BJ (cell line): ENCODE measurements at regions of chr16 and their contacts with region 1.

Region 1: GRCh38 chr16:16021988-16022682 is 72.7 kb downstream of the ABCC1 start:
- DNase-seq: peak; percentile 85
- H3K4me3 ChIP-seq: no peak overlapping the region
- H3K27me3 ChIP-seq: no peaks in the 10 kb centered on the region
- CTCF ChIP-seq: no peak

Region 2: DNA sequence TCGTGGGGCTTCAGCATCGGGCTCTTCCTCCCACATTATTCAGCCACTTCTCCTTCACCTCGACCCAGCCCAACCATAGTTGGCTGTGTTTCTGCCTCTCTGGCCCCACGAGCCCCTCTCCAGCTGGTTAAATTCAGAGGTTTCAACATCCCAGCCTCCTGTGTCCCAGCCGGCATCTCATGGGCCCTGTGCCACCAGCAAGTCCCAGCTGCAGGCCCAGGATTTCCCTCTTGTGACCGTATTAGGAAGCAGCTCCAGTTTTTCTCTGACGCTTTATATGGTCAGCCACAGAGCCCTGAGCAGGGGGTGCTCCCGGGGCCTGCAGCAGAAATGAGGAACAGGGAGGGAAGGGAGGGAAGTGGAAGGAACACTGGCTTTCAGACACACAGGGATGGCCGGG is 192.7 kb before region 1 on chr16:
- CTCF ChIA-PET with region 1: no interaction called
- POLR2A ChIA-PET with region 1: no interaction called
- DNase-seq: no peak
- H3K4me3 ChIP-seq: no peak overlapping the region
- H3K27me3 ChIP-seq: peaks cover 9% of the 10 kb centered on the region; the same call in 1 of the 2 replicates
- CTCF ChIP-seq: no peak

Region 3: GRCh38 chr16:15865742-15866141 is 156.4 kb before region 1 on chr16:
- CTCF ChIA-PET with region 1: no interaction called
- POLR2A ChIA-PET with region 1: interaction called, 10 read pairs
- DNase-seq: no peak
- H3K4me3 ChIP-seq: no peak overlapping the region
- H3K27me3 ChIP-seq: no peaks in the 10 kb centered on the region
- CTCF ChIP-seq: no peak

Region 4: DNA sequence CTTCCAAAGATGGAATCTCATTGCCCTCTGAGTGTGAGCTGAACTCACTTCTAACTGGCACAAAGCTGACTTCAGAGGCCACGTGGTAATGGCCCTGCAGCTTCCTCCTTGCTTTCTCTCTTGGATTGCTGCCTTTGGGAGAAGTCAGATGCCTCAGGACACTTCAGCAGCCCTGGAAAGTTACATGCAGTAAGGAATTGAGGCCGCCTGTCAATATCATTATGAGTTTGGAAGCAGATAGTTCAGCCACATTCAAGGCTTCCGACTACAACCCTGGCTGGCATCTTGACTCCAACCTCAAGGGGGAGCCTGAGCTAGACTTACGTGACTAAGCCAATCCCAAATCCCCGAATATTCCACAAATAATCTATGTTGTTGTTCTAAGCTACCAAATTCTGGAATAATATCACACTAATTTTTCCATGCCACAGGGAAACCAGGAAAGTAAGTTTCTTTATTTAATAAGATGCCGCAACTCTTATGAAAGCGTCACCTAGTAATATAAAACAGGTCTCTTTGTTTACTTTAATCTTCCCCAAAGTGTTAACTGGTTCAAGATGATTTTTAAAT is 147.3 kb before region 1 on chr16:
- CTCF ChIA-PET with region 1: interaction called, 13 read pairs
- POLR2A ChIA-PET with region 1: interaction called, 5 read pairs
- DNase-seq: no peak
- H3K4me3 ChIP-seq: no peak overlapping the region
- H3K27me3 ChIP-seq: no peaks in the 10 kb centered on the region
- CTCF ChIP-seq: peak; percentile 87

Region 5: GRCh38 chr16:16045879-16046278 is 23.7 kb after region 1 on chr16:
- CTCF ChIA-PET with region 1: no interaction called
- POLR2A ChIA-PET with region 1: no interaction called
- DNase-seq: no peak
- H3K4me3 ChIP-seq: no peak overlapping the region
- H3K27me3 ChIP-seq: no peaks in the 10 kb centered on the region
- CTCF ChIP-seq: peak; percentile 22; the same call in 1 of the 2 replicates

Region 6: GRCh38 chr16:16933861-16934260 is 911.7 kb after region 1 on chr16:
- CTCF ChIA-PET with region 1: no interaction called
- POLR2A ChIA-PET with region 1: no interaction called
- DNase-seq: no peak
- H3K4me3 ChIP-seq: no peak overlapping the region
- H3K27me3 ChIP-seq: no peaks in the 10 kb centered on the region
- CTCF ChIP-seq: no peak